Breast epithelium (tissue), 4 donors: ENCODE measurements at regions of chr5 and their contacts with region 1.

Region 1: DNA sequence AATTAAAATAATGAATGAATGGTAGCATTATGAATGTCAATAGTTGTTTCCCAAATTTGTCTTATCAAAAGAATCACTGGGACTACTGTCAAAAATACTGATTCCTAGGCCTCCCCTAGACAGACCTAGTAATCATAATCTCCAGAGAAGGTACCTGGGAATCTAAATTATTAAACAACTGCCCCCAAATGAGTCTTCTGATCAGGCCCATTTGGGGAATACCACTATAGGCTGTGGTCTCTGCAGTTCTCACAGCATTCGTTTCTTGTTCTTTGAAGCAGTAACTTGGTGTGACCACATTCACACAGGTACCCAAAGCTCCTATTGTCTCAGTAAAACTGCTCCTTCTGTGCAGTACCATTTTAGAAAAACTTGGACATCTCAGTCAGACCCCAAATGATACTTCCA is 230.9 kb downstream of the PIK3R1 start:
- DNase-seq: no peak
- H3K4me3 ChIP-seq: no peak overlapping the region
- H3K27ac ChIP-seq: peak overlapping the region; percentile 91 to 92
- H3K4me1 ChIP-seq: peaks cover 0 to 16% of the 10 kb centered on the region in 2 donors
- H3K27me3 ChIP-seq: no peaks in the 10 kb centered on the region
- CTCF ChIP-seq: no peak
- POLR2A ChIP-seq: no peak

Region 2: GRCh38 chr5:67038817-67039603 is 1407.5 kb before region 1 on chr5:
- intact Hi-C with region 1: no loop called
- DNase-seq: no peak
- H3K4me3 ChIP-seq: no peak overlapping the region
- H3K27ac ChIP-seq: no peak overlapping the region
- H3K4me1 ChIP-seq: no peaks in the 10 kb centered on the region
- H3K27me3 ChIP-seq: no peaks in the 10 kb centered on the region
- CTCF ChIP-seq: no peak
- POLR2A ChIP-seq: no peak

Region 3: DNA sequence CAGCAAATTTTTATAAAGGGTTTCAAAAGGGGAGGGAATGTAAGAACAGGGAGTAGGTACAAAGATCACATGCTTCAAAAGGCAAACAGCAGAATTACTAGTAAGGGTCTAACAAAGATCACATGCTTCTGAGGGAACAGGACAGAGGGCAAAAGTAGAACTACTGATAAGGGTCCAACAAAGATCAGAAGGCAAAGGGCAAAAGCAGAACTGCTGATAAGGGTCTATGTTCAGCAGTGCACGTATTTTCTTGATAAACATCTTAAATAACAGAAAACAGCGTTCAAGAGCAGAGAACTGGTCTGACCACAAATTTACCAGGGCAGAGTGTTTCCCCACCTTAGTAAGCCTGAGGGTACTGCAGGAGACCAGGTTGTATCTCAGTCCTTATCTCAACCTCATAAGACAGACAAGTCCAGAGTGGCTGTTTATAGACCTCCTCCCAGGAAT is 700.4 kb before region 1 on chr5:
- intact Hi-C with region 1: loop called (anchors 5 kb)
- DNase-seq: no peak
- H3K4me3 ChIP-seq: no peak overlapping the region
- H3K27ac ChIP-seq: no peak overlapping the region
- H3K4me1 ChIP-seq: no peaks in the 10 kb centered on the region
- H3K27me3 ChIP-seq: no peaks in the 10 kb centered on the region
- CTCF ChIP-seq: no peak
- POLR2A ChIP-seq: no peak